Naive thymus-derived CD4-positive, alpha-beta T cell (primary cell): ENCODE measurements at regions of chr7 and their contacts with region 1.

Region 1: GRCh38 chr7:95690367-95690947 is 81.9 kb upstream of the DYNC1I1 start:
- DNase-seq: no peak
- ATAC-seq: peak; percentile 54
- H3K4me3 ChIP-seq: no peak overlapping the region
- H3K4me3 Mint-ChIP-seq: peak overlapping the region in 1 of 10 donors; percentile 22
- H3K27ac ChIP-seq: no peak overlapping the region
- H3K27ac Mint-ChIP-seq: no peak overlapping the region
- H3K4me1 ChIP-seq: no peaks in the 10 kb centered on the region
- H3K4me1 Mint-ChIP-seq: peaks cover 0 to 5% (median 0%) of the 10 kb centered on the region in 7 donors
- H3K27me3 ChIP-seq: no peaks in the 10 kb centered on the region
- H3K27me3 Mint-ChIP-seq: peaks cover 0 to 10% (median 6%) of the 10 kb centered on the region in 5 donors

Region 2: GRCh38 chr7:95511716-95512260 is 178.7 kb before region 1 on chr7:
- CTCF ChIA-PET with region 1: no interaction called
- POLR2A ChIA-PET with region 1: no interaction called
- intact Hi-C with region 1: loop called (anchors 1 to 2 kb)
- DNase-seq: peak in 5 of 9 donors; percentile 9 to 43 (median 19)
- ATAC-seq: peak; percentile 87
- H3K4me3 ChIP-seq: no peak overlapping the region
- H3K4me3 Mint-ChIP-seq: peak overlapping the region in 1 of 10 donors; percentile 4
- H3K27ac ChIP-seq: no peak overlapping the region
- H3K27ac Mint-ChIP-seq: no peak overlapping the region
- H3K4me1 ChIP-seq: no peaks in the 10 kb centered on the region
- H3K4me1 Mint-ChIP-seq: peaks cover 0 to 4% (median 0%) of the 10 kb centered on the region in 7 donors
- H3K27me3 ChIP-seq: no peaks in the 10 kb centered on the region
- H3K27me3 Mint-ChIP-seq: peaks cover 0 to 18% (median 16%) of the 10 kb centered on the region in 5 donors

Region 3: DNA sequence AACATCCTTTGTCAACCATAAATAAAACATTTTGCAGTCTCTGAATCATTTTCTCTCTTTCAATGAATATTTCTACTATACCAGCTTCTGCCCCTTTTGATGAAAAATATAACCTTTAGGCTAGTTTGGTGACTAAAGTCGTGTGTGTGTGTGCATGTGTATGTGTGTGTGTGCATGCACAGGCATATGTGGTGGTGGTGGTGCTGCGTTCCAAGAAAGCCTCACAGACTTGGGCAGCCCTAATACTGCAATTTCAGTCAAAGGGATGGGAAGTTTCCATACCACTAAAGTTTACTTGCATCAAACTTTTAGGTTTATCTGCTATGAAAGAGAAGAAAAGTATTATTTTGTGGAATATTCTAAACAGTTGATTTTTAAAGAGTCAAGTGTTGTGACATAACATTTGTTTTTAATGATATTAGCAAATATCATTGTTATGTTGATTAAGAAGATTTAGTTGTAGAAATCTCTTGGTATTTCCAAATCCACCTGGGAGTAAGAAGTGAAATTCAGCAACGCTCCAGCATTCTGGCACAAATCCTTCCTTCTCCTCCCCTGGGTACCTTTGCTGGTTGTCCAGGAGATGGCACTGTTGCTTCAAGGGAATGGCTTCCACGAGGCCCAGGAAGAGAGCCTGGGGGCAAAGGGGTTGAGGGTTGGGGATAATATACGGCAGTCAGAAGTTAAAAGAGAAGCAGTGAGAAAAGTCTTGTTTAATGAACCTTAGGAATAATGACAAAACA is 163.3 kb before region 1 on chr7:
- CTCF ChIA-PET with region 1: no interaction called
- POLR2A ChIA-PET with region 1: no interaction called
- intact Hi-C with region 1: loop called in 1 of 2 experiments (anchors 1 kb)
- DNase-seq: no peak
- ATAC-seq: peak; percentile 50
- H3K4me3 ChIP-seq: no peak overlapping the region
- H3K4me3 Mint-ChIP-seq: no peak overlapping the region
- H3K27ac ChIP-seq: no peak overlapping the region
- H3K27ac Mint-ChIP-seq: no peak overlapping the region
- H3K4me1 ChIP-seq: no peaks in the 10 kb centered on the region
- H3K4me1 Mint-ChIP-seq: no peaks in the 10 kb centered on the region
- H3K27me3 ChIP-seq: no peaks in the 10 kb centered on the region
- H3K27me3 Mint-ChIP-seq: peaks cover 5 to 19% (median 8%) of the 10 kb centered on the region in 5 donors